Caco-2 (cell line): ENCODE measurements at regions of chrX and their contacts with region 1.

Region 1: GRCh38 chrX:139126493-139126892 is 404.0 kb upstream of the F9 start:
- DNase-seq: peak; percentile 63 to 67
- H3K4me3 ChIP-seq: no peak overlapping the region
- H3K4me3 Mint-ChIP-seq: no peak overlapping the region
- H3K27ac Mint-ChIP-seq: no peak overlapping the region
- H3K4me1 ChIP-seq: no peaks in the 10 kb centered on the region
- H3K4me1 Mint-ChIP-seq: no peaks in the 10 kb centered on the region
- H3K27me3 ChIP-seq: no peaks in the 10 kb centered on the region
- H3K27me3 Mint-ChIP-seq: no peaks in the 10 kb centered on the region
- CTCF ChIP-seq: peak; percentile 63 to 70

Region 2: DNA sequence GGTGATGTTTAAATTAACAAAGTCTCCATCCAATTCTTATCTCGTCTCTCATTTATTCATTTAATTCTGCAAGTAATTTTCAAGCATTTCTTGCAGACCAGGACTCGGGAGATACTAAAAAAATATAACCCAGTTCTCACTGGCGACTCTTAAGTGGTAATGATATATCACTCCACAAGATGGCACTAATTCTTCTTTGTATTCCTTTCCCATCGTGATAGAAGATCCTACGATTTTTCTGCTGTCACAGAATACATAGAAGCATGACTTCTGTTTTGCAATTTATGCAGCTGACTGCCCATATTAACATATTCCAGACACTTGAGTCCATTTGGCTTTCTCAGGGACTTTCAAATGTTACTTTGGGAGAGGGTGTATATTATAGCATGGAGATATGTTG is 351.0 kb before region 1 on chrX:
- CTCF ChIA-PET with region 1: no interaction called
- POLR2A ChIA-PET with region 1: no interaction called
- intact Hi-C with region 1: loop called (anchors 5 kb)
- DNase-seq: peak in 1 of 2 experiments; percentile 1
- H3K4me3 ChIP-seq: no peak overlapping the region
- H3K4me3 Mint-ChIP-seq: no peak overlapping the region
- H3K27ac Mint-ChIP-seq: no peak overlapping the region
- H3K4me1 ChIP-seq: no peaks in the 10 kb centered on the region
- H3K4me1 Mint-ChIP-seq: no peaks in the 10 kb centered on the region
- H3K27me3 ChIP-seq: no peaks in the 10 kb centered on the region
- H3K27me3 Mint-ChIP-seq: no peaks in the 10 kb centered on the region
- CTCF ChIP-seq: peak in 1 of 2 experiments; percentile 32

Region 3: DNA sequence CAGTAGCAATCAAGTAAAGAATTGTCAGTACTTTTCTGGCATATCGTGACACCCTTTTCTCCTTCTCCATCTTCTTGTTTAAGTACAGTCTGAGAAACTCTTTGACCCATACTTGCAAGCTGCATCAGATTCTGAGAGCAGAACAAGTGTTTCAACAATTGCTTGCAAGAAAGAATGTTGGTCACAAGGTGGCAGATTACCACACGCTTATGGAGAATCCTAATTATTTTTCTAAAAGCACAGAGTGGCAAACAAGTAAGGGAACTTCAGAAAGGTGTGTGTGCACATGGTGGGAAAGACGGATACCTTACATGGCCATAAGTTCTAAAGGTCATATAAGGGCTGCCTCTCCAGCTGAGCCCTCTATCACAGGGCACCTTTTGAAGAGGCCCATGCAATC is 278.6 kb before region 1 on chrX:
- CTCF ChIA-PET with region 1: no interaction called
- POLR2A ChIA-PET with region 1: no interaction called
- intact Hi-C with region 1: loop called (anchors 1 kb)
- DNase-seq: peak in 1 of 2 experiments; percentile 4
- H3K4me3 ChIP-seq: no peak overlapping the region
- H3K4me3 Mint-ChIP-seq: no peak overlapping the region
- H3K27ac Mint-ChIP-seq: no peak overlapping the region
- H3K4me1 ChIP-seq: no peaks in the 10 kb centered on the region
- H3K4me1 Mint-ChIP-seq: no peaks in the 10 kb centered on the region
- H3K27me3 ChIP-seq: no peaks in the 10 kb centered on the region
- H3K27me3 Mint-ChIP-seq: no peaks in the 10 kb centered on the region
- CTCF ChIP-seq: peak in 1 of 2 experiments; percentile 15

Region 4: GRCh38 chrX:138914767-138915166 is 211.7 kb before region 1 on chrX:
- CTCF ChIA-PET with region 1: no interaction called
- POLR2A ChIA-PET with region 1: no interaction called
- intact Hi-C with region 1: no loop called
- DNase-seq: no peak
- H3K4me3 ChIP-seq: no peak overlapping the region
- H3K4me3 Mint-ChIP-seq: no peak overlapping the region
- H3K27ac Mint-ChIP-seq: no peak overlapping the region
- H3K4me1 ChIP-seq: no peaks in the 10 kb centered on the region
- H3K4me1 Mint-ChIP-seq: no peaks in the 10 kb centered on the region
- H3K27me3 ChIP-seq: no peaks in the 10 kb centered on the region
- H3K27me3 Mint-ChIP-seq: no peaks in the 10 kb centered on the region
- CTCF ChIP-seq: no peak

Region 5: DNA sequence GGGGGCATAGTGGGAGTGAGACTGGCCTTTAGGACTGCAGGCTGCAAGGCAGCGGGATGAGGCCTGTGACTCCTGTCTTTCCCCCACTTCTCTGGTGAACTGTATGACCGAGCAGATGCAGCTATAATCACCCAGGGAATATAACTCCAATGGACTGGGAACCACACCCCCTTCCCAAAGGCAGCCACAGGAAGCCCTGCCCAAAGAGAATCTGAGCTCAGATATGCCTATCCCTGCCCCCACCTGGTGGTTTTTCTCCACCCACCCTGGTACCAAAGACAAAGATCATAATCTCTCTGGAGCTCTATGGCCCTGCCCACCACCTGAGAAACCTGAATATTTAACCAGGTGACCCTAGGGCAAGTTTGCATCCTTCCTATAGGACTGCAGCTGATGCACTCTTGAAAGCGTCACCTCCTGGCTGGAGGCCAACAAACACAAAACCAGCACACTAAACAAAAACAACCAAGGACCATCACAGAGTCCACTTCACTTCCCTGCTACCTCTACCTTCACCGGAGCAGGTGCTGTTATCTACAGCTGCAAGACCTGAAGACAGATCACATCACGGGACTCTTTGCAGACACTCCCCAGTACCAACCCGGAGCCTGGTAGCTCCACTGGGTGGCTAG is 118.4 kb before region 1 on chrX:
- CTCF ChIA-PET with region 1: no interaction called
- POLR2A ChIA-PET with region 1: no interaction called
- intact Hi-C with region 1: no loop called
- DNase-seq: no peak
- H3K4me3 ChIP-seq: no peak overlapping the region
- H3K4me3 Mint-ChIP-seq: no peak overlapping the region
- H3K27ac Mint-ChIP-seq: no peak overlapping the region
- H3K4me1 ChIP-seq: no peaks in the 10 kb centered on the region
- H3K4me1 Mint-ChIP-seq: no peaks in the 10 kb centered on the region
- H3K27me3 ChIP-seq: no peaks in the 10 kb centered on the region
- H3K27me3 Mint-ChIP-seq: no peaks in the 10 kb centered on the region
- CTCF ChIP-seq: no peak

Region 6: DNA sequence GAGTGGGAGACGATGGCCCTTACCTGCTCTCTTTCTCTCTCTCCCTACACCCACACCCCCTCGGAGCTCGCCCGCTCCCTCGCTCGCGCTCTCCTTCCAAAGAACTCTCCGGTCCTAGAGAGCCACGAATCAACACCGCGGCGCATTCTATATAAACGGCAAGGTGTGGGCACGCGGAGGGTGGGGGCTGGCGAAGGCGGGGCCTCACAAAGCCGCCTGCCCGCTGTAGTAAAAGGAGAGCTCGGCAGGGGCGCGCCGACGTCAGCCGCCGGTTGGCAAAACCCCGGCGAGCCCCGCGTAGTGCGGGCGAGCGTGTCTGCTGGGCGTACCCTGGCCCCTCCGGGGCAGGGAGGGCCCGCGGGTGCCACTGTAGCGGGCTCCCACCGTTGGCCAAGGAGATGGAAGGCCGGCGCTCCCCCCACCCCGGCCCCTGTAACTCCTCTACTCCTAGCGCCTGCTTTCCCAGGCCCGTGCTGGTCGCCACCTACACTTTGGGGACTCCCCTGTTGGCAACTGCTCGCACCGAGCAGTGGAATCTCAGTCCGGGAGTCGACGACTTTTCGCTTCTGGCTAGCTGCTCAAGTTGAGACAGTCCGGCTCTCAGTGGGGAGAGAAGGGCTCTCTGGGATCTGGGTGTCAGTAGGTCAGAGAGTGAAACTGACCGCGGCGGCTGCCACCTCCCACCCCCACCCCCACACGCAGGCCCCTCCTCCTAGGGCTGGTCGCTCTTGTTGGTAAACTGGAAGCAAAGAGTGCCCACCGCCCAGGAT is 78.6 kb after region 1 on chrX:
- CTCF ChIA-PET with region 1: no interaction called
- POLR2A ChIA-PET with region 1: no interaction called
- intact Hi-C with region 1: loop called (anchors 2 kb)
- DNase-seq: peak; percentile 57 to 71
- H3K4me3 ChIP-seq: peak overlapping the region; percentile 53
- H3K4me3 Mint-ChIP-seq: peak overlapping the region; percentile 95
- H3K27ac Mint-ChIP-seq: peak overlapping the region; percentile 92
- H3K4me1 ChIP-seq: 0 out of 2 replicates have a peak, but pooled peaks cover 3% of the 10 kb centered on the region
- H3K4me1 Mint-ChIP-seq: peaks cover 7% of the 10 kb centered on the region
- H3K27me3 ChIP-seq: no peaks in the 10 kb centered on the region
- H3K27me3 Mint-ChIP-seq: no peaks in the 10 kb centered on the region
- CTCF ChIP-seq: no peak

Region 7: GRCh38 chrX:139429913-139430312 is 303.4 kb after region 1 on chrX:
- CTCF ChIA-PET with region 1: interaction called, 3 read pairs
- POLR2A ChIA-PET with region 1: no interaction called
- intact Hi-C with region 1: loop called (anchors 2 kb)
- DNase-seq: peak in 1 of 2 experiments; percentile 5
- H3K4me3 ChIP-seq: no peak overlapping the region
- H3K4me3 Mint-ChIP-seq: no peak overlapping the region
- H3K27ac Mint-ChIP-seq: no peak overlapping the region
- H3K4me1 ChIP-seq: no peaks in the 10 kb centered on the region
- H3K4me1 Mint-ChIP-seq: no peaks in the 10 kb centered on the region
- H3K27me3 ChIP-seq: no peaks in the 10 kb centered on the region
- H3K27me3 Mint-ChIP-seq: peaks cover 7% of the 10 kb centered on the region
- CTCF ChIP-seq: peak in 1 of 2 experiments; percentile 50

Region 8: GRCh38 chrX:139559383-139560042 is 433.0 kb after region 1 on chrX:
- CTCF ChIA-PET with region 1: no interaction called
- POLR2A ChIA-PET with region 1: no interaction called
- intact Hi-C with region 1: loop called (anchors 1 kb)
- DNase-seq: peak in 1 of 2 experiments; percentile 43
- H3K4me3 ChIP-seq: no peak overlapping the region
- H3K4me3 Mint-ChIP-seq: no peak overlapping the region
- H3K27ac Mint-ChIP-seq: no peak overlapping the region
- H3K4me1 ChIP-seq: no peaks in the 10 kb centered on the region
- H3K4me1 Mint-ChIP-seq: no peaks in the 10 kb centered on the region
- H3K27me3 ChIP-seq: no peaks in the 10 kb centered on the region
- H3K27me3 Mint-ChIP-seq: no peaks in the 10 kb centered on the region
- CTCF ChIP-seq: peak; percentile 36 to 57